Psoas muscle (tissue), 8 donors: ENCODE measurements at regions of chr1 and their contacts with region 1.

Region 1: DNA sequence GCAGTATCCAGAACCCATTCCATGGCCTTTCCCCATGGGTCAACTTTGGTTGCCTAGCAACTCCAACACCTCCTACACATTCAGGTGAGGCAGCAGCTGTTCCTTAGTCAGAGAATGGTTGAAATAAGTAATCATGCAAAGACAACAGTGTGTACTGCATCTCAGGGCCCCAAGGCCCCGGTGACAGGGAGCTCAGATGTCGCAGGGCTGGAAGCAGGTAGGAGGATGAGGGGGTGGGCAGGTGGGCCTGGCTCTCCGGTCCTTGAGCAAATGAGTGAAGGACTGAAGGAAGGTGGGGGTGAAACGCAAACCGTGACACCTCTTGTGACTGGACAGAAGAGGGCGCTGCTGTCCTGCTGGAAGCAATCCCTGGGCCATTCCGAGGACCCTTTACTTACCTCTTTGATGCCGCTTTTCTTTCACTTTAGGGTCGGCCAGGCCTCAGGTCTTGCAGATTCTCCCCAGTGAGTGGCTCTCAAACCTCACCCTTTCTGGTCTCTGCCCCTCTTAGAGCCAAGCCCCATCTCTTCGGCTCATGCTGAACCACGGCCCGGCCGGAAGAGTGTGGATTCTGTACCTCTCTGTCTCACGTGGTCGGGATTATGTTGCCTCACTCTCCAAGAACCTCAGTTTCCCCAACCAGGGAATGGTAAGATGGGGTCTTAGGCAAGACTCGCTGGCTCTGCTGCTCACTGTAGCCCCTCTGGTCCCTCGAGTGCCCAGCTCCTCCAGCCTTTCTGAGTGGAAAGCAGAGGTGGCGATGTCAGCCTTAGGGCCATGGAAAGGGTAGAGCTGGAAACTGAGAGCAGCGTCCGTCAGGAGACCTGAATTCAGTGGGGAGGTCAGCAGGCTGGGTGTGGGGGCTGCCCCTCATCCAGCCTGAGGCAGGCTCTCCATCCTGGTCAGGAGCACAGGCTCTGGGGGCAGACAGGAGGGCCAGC is 5.6 kb upstream of the KCNA10 start:
- DNase-seq: no peak
- ATAC-seq: peak in 1 of 4 donors; percentile 46
- H3K4me3 ChIP-seq: no peak overlapping the region
- H3K27ac ChIP-seq: no peak overlapping the region
- H3K4me1 ChIP-seq: no peaks in the 10 kb centered on the region
- H3K27me3 ChIP-seq: peaks cover 0 to 30% (median 4%) of the 10 kb centered on the region in 3 donors
- CTCF ChIP-seq: peak; percentile 52

Region 2: GRCh38 chr1:110615548-110616492 is 91.2 kb after region 1 on chr1:
- intact Hi-C with region 1: loop called in 1 of 2 experiments (anchors 2 kb)
- DNase-seq: peak; percentile 38 to 69
- ATAC-seq: peak; percentile 59 to 82 (median 74)
- H3K4me3 ChIP-seq: no peak overlapping the region
- H3K27ac ChIP-seq: no peak overlapping the region
- H3K4me1 ChIP-seq: no peaks in the 10 kb centered on the region
- H3K27me3 ChIP-seq: peaks cover 0 to 40% (median 4%) of the 10 kb centered on the region in 3 donors
- CTCF ChIP-seq: peak; percentile 77

Region 3: GRCh38 chr1:110780600-110781484 is 256.3 kb after region 1 on chr1:
- intact Hi-C with region 1: loop called in 1 of 2 experiments (anchors 5 kb)
- DNase-seq: peak; percentile 32 to 61
- ATAC-seq: peak; percentile 51 to 77 (median 66)
- H3K4me3 ChIP-seq: no peak overlapping the region
- H3K27ac ChIP-seq: no peak overlapping the region
- H3K4me1 ChIP-seq: no peaks in the 10 kb centered on the region
- H3K27me3 ChIP-seq: peaks cover 0 to 8% (median 0%) of the 10 kb centered on the region in 3 donors
- CTCF ChIP-seq: peak; percentile 65